ENCODE measurements at regions of chr15 and their contacts with region 1.

Region 1: GRCh38 chr15:70097337-70098169 is at the start of gene TLE3:
- DNase-seq: peak; percentile 96 to 99 (median 98)
- ATAC-seq: peak; percentile 54
- H3K4me3 ChIP-seq: peak within 1 kb of the TSS; percentile 97
- H3K4me3 Mint-ChIP-seq: peak within 1 kb of the TSS; percentile 96
- H3K27ac ChIP-seq: peak within 1 kb of the TSS; percentile 90
- H3K27ac Mint-ChIP-seq: peak within 1 kb of the TSS; percentile 95
- H3K4me1 ChIP-seq: peaks cover 70% of the 10 kb centered on the region
- H3K4me1 Mint-ChIP-seq: peaks cover 69% of the 10 kb centered on the region
- H3K27me3 ChIP-seq: no peaks in the 10 kb centered on the region
- H3K27me3 Mint-ChIP-seq: peaks cover 9% of the 10 kb centered on the region
- CTCF ChIP-seq: peak; percentile 61
- total RNA-seq, gene TLE3: 159 to 167 TPM

Region 2: DNA sequence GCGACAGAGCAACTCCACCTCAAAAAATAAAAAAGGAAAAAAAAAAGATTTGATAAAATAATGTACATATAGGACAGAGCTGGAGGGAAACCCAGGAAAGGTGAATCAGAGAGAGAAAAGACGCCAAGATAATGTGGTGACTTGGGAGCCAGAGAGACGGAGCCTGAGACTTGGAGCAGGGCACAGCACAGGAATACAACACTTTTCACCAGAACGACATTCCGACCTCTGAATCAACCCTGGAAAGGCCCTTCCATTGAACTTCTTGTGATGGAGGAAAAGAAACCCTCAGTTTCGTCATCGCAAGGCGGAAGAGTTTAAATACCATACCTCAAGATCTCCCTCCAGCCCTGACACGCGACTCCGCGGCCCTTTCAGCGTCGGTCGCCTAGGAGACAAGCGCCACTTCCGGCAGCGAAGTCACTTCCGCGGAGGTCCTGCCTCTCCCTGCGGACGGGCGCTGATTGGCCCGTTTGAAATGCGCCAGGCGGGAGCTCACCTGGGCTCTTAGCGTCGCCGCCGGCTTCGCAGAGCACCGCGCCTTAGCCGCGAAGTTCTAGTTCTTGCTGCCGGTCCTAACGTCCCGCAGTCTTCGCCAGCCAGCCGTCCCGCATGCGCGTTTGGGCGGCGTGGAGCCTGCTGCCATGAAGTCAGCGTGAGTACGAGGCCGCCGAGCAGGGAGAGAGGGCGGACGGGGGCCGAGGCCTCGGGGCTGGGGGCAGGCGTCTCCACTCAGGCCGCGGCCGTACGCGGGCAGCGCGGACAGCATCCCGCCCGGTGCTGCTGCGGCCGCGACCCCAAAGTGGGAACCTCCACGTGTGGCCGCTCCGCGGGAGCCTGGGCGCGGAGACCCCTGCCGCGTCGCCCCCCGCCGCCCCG is 683.5 kb before region 1 on chr15 and contains the start of gene KIF23:
- CTCF ChIA-PET with region 1: no interaction called
- POLR2A ChIA-PET with region 1: no interaction called
- intact Hi-C with region 1: loop called in 1 of 2 experiments (anchors 5 kb)
- DNase-seq: peak; percentile 88 to 99 (median 91)
- ATAC-seq: peak; percentile 99
- H3K4me3 ChIP-seq: peak within 1 kb of the TSS; percentile 76
- H3K4me3 Mint-ChIP-seq: peak within 1 kb of the TSS; percentile 86
- H3K27ac ChIP-seq: no peak within 1 kb of the TSS
- H3K27ac Mint-ChIP-seq: peak within 1 kb of the TSS; percentile 2
- H3K4me1 ChIP-seq: peaks cover 19% of the 10 kb centered on the region
- H3K4me1 Mint-ChIP-seq: peaks cover 6% of the 10 kb centered on the region
- H3K27me3 ChIP-seq: peaks cover 0 to 8% of the 10 kb centered on the region in 2 experiments
- H3K27me3 Mint-ChIP-seq: peaks cover 18% of the 10 kb centered on the region
- CTCF ChIP-seq: no peak
- total RNA-seq, gene KIF23: 0.71 to 1.1 TPM

Region 3: GRCh38 chr15:69468241-69469121 is 629.1 kb before region 1 on chr15:
- CTCF ChIA-PET with region 1: interaction called, 8 read pairs
- POLR2A ChIA-PET with region 1: interaction called, 20 read pairs
- intact Hi-C with region 1: loop called in 1 of 2 experiments (anchors 1 kb)
- DNase-seq: peak; percentile 74 to 97 (median 81)
- ATAC-seq: peak; percentile 88
- H3K4me3 ChIP-seq: peak overlapping the region; percentile 15
- H3K4me3 Mint-ChIP-seq: peak overlapping the region; percentile 70
- H3K27ac ChIP-seq: peak overlapping the region; percentile 91
- H3K27ac Mint-ChIP-seq: peak overlapping the region; percentile 90
- H3K4me1 ChIP-seq: peaks cover 39% of the 10 kb centered on the region
- H3K4me1 Mint-ChIP-seq: peaks cover 29% of the 10 kb centered on the region
- H3K27me3 ChIP-seq: no peaks in the 10 kb centered on the region
- H3K27me3 Mint-ChIP-seq: no peaks in the 10 kb centered on the region
- CTCF ChIP-seq: no peak

Region 4: DNA sequence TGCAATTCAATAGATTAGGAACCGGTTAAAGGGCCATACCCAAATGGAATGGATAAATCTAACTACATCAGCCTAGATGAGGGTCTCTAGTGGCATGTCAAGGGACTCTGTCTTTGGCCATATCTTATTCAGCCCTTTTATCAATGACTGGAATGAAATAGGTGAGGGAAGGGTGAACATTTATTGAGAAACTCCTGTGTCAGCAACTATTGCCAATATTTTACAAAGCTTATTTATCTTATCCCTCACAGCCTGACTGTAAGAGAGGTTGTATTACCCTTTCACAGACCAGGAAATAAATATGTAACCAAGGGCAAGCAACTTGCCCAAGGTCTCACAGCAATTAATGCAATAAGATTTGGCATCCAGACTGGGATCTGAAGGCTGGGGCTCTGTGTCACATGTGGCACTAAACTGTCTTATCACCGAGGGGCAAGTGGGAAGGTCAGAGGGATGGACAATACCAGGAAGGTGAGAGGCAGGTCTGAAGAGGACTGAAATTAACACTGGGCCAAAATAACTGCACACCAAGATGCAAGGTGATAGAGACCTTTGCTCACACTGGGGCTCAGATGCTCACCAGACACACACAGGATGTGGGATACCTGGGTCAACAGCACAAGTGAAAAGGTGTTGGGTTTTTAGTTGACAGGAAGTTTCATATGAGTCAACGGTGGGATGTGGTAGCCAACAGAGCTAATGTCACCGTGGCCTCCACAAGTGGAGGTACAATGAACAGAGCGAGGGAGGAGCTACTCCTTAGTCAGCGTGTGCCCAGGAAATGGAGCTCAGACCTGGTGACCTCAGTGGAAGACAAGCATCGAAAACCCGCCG is 383.6 kb before region 1 on chr15:
- CTCF ChIA-PET with region 1: interaction called, 4 read pairs
- POLR2A ChIA-PET with region 1: interaction called, 65 read pairs
- intact Hi-C with region 1: loop called in 1 of 2 experiments (anchors 2 kb)
- DNase-seq: peak; percentile 40 to 95 (median 66)
- ATAC-seq: peak; percentile 93
- H3K4me3 ChIP-seq: peak overlapping the region; percentile 12
- H3K4me3 Mint-ChIP-seq: peak overlapping the region; percentile 32
- H3K27ac ChIP-seq: peak overlapping the region; percentile 32 to 44
- H3K27ac Mint-ChIP-seq: peak overlapping the region; percentile 78
- H3K4me1 ChIP-seq: peaks cover 46% of the 10 kb centered on the region
- H3K4me1 Mint-ChIP-seq: peaks cover 49% of the 10 kb centered on the region
- H3K27me3 ChIP-seq: no peaks in the 10 kb centered on the region
- H3K27me3 Mint-ChIP-seq: no peaks in the 10 kb centered on the region
- CTCF ChIP-seq: no peak

Region 5: GRCh38 chr15:69755551-69756310 is 341.8 kb before region 1 on chr15:
- CTCF ChIA-PET with region 1: interaction called, 12 read pairs
- POLR2A ChIA-PET with region 1: interaction called, 160 read pairs
- intact Hi-C with region 1: loop called (anchors 2 kb)
- DNase-seq: peak; percentile 29 to 88 (median 68)
- ATAC-seq: peak; percentile 57
- H3K4me3 ChIP-seq: peak overlapping the region; percentile 15
- H3K4me3 Mint-ChIP-seq: peak overlapping the region; percentile 73
- H3K27ac ChIP-seq: no peak overlapping the region
- H3K27ac Mint-ChIP-seq: peak overlapping the region; percentile 77
- H3K4me1 ChIP-seq: peaks cover 71% of the 10 kb centered on the region
- H3K4me1 Mint-ChIP-seq: peaks cover 94% of the 10 kb centered on the region
- H3K27me3 ChIP-seq: no peaks in the 10 kb centered on the region
- H3K27me3 Mint-ChIP-seq: peaks cover 6% of the 10 kb centered on the region
- CTCF ChIP-seq: no peak

Region 6: GRCh38 chr15:70047386-70048197 is 50.0 kb before region 1 on chr15:
- CTCF ChIA-PET with region 1: interaction called, 3 read pairs
- POLR2A ChIA-PET with region 1: interaction called, 4 read pairs
- intact Hi-C with region 1: loop called in 1 of 2 experiments (anchors 10 kb)
- DNase-seq: no peak
- ATAC-seq: no peak
- H3K4me3 ChIP-seq: no peak overlapping the region
- H3K4me3 Mint-ChIP-seq: no peak overlapping the region
- H3K27ac ChIP-seq: no peak overlapping the region
- H3K27ac Mint-ChIP-seq: no peak overlapping the region
- H3K4me1 ChIP-seq: no peaks in the 10 kb centered on the region
- H3K4me1 Mint-ChIP-seq: no peaks in the 10 kb centered on the region
- H3K27me3 ChIP-seq: no peaks in the 10 kb centered on the region
- H3K27me3 Mint-ChIP-seq: no peaks in the 10 kb centered on the region
- CTCF ChIP-seq: no peak

Region 7: GRCh38 chr15:70165716-70166284 is 68.2 kb after region 1 on chr15:
- CTCF ChIA-PET with region 1: no interaction called
- POLR2A ChIA-PET with region 1: no interaction called
- intact Hi-C with region 1: no loop called
- DNase-seq: no peak
- ATAC-seq: no peak
- H3K4me3 ChIP-seq: no peak overlapping the region
- H3K4me3 Mint-ChIP-seq: no peak overlapping the region
- H3K27ac ChIP-seq: no peak overlapping the region
- H3K27ac Mint-ChIP-seq: no peak overlapping the region
- H3K4me1 ChIP-seq: no peaks in the 10 kb centered on the region
- H3K4me1 Mint-ChIP-seq: no peaks in the 10 kb centered on the region
- H3K27me3 ChIP-seq: no peaks in the 10 kb centered on the region
- H3K27me3 Mint-ChIP-seq: no peaks in the 10 kb centered on the region
- CTCF ChIP-seq: no peak

Region 8: GRCh38 chr15:70415398-70415797 is 317.8 kb after region 1 on chr15:
- CTCF ChIA-PET with region 1: no interaction called
- POLR2A ChIA-PET with region 1: no interaction called
- intact Hi-C with region 1: no loop called
- DNase-seq: no peak
- ATAC-seq: no peak
- H3K4me3 ChIP-seq: no peak overlapping the region
- H3K4me3 Mint-ChIP-seq: no peak overlapping the region
- H3K27ac ChIP-seq: no peak overlapping the region
- H3K27ac Mint-ChIP-seq: no peak overlapping the region
- H3K4me1 ChIP-seq: no peaks in the 10 kb centered on the region
- H3K4me1 Mint-ChIP-seq: no peaks in the 10 kb centered on the region
- H3K27me3 ChIP-seq: peaks cover 0 to 2% of the 10 kb centered on the region in 2 experiments
- H3K27me3 Mint-ChIP-seq: no peaks in the 10 kb centered on the region
- CTCF ChIP-seq: no peak

Region 9: DNA sequence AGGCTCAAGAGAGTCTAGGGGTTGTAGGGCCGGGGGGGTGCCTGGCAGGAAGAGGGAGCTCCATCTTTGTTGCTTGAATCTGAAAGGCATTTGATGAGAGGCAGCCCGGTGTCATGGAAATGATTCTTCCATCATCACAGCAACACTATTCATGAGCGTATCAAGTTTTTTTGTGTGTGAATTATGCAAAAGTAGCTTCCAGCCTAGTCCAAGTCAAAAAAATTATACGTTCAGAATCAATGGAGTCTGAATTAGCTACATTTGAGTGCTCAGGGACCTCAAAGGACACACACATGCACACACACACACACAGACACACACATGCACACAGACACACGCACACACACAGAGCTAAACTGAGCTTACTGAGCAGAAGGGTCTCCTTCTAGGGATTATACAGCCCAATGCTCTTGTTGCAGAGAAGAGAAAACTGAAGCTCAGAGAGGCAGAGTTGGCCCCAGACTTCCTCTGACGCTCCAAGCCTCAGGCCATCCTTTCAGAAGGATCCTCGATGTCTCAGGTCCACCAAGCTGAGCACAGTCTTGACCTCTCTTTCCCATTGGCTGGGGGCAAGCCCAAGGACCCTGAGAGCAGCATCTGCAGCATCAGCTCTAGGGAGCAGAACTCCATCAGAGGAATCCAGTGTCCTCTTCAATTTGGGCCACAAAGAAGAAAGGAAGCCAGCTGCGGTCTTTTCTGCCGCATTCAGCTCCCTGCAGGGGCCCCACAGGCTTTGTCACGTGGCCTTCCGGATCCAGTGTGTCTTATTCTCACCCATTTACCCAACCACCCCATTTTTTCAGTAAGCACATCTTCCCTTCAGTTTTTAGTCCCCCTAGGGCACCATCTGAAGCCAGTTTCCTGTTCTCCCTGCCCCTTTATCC is 437.8 kb after region 1 on chr15:
- CTCF ChIA-PET with region 1: interaction called, 6 read pairs
- POLR2A ChIA-PET with region 1: interaction called, 28 read pairs
- intact Hi-C with region 1: no loop called
- DNase-seq: peak; percentile 35 to 84 (median 58)
- ATAC-seq: peak; percentile 76
- H3K4me3 ChIP-seq: peak overlapping the region; percentile 61
- H3K4me3 Mint-ChIP-seq: peak overlapping the region; percentile 93
- H3K27ac ChIP-seq: peak overlapping the region; percentile 65
- H3K27ac Mint-ChIP-seq: peak overlapping the region; percentile 98
- H3K4me1 ChIP-seq: peaks cover 69% of the 10 kb centered on the region
- H3K4me1 Mint-ChIP-seq: peaks cover 78% of the 10 kb centered on the region
- H3K27me3 ChIP-seq: no peaks in the 10 kb centered on the region
- H3K27me3 Mint-ChIP-seq: no peaks in the 10 kb centered on the region
- CTCF ChIP-seq: no peak

Measured in CD4-positive, alpha-beta T cell (primary cell).